ENCODE measurements at regions of chr15 and their contacts with region 1.

Region 1: DNA sequence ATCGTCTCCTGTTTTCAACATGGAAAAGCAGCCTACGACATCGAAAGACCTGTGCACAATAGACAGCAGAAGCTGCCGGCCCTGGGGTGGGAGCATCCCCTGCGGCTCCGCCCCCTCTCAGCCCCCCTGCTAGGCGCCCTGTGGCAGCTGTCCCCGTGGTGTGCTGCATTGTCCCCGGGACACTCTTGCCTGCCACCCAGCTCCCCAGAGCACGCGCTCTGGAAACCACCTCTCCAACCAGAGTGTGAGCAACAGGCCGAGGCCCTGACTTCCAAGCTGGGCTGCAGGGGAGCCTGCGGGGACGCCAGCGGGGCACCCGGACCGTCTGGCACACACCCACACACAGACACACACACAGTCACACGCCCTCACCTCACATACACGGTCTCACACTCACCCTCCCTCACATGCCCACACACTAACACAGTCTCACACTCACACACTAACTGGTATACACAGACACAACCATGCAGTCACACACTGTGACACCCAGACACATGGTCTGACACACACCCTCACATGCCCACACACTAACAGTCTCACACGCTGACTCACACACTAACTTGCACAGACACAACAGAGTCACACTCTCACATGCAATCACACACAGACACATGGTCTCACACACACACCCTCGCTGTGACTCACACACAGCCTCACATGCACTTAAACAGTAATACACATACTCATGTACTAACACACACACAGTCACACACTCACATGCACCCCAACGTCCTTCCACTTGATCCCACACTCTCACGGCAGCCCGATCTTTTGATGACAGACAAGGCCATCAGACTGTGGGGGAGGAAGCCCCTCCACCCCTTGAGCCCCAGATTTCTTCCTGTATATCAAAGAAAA is 94.7 kb downstream of the OCA2 start:
- DNase-seq: no peak
- ATAC-seq: no peak
- H3K4me3 Mint-ChIP-seq: no peak overlapping the region
- H3K27ac Mint-ChIP-seq: no peak overlapping the region
- H3K4me1 Mint-ChIP-seq: no peaks in the 10 kb centered on the region
- H3K27me3 Mint-ChIP-seq: no peaks in the 10 kb centered on the region
- CTCF ChIP-seq: no peak

Region 2: DNA sequence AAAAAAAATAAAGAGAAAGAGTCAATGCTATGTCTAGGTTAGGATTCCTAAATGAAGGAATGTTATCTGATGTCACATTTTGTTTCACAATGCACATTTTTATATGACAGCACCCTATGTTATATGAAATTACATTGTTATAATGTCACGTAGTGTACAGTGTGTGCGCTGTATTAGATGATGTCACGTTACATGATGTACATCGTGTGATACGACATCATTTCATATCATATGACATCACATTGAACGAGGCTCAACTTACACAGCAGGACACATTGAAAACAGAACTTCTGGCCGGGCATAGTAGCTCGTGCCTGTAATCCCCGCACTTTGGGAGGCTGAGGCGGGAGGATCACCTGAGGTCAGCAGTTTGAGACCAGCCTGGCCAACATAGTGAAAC is 55.3 kb before region 1 on chr15:
- CTCF ChIA-PET with region 1: no interaction called
- POLR2A ChIA-PET with region 1: no interaction called
- intact Hi-C with region 1: loop called (anchors 10 kb)
- DNase-seq: no peak
- ATAC-seq: no peak
- H3K4me3 Mint-ChIP-seq: no peak overlapping the region
- H3K27ac Mint-ChIP-seq: no peak overlapping the region
- H3K4me1 Mint-ChIP-seq: no peaks in the 10 kb centered on the region
- H3K27me3 Mint-ChIP-seq: no peaks in the 10 kb centered on the region
- CTCF ChIP-seq: no peak

Region 3: GRCh38 chr15:28021281-28022039 is 17.1 kb after region 1 on chr15:
- CTCF ChIA-PET with region 1: no interaction called
- POLR2A ChIA-PET with region 1: no interaction called
- intact Hi-C with region 1: no loop called
- DNase-seq: peak; percentile 27
- ATAC-seq: no peak
- H3K4me3 Mint-ChIP-seq: no peak overlapping the region
- H3K27ac Mint-ChIP-seq: no peak overlapping the region
- H3K4me1 Mint-ChIP-seq: no peaks in the 10 kb centered on the region
- H3K27me3 Mint-ChIP-seq: no peaks in the 10 kb centered on the region
- CTCF ChIP-seq: no peak